Dorsolateral prefrontal cortex (tissue), 120 donors: ENCODE measurements at regions of chr9 and their contacts with region 1.

Region 1: GRCh38 chr9:33903157-33903780 is 86.3 kb downstream of the UBE2R2 start:
- DNase-seq: no peak
- H3K4me3 ChIP-seq: no peak overlapping the region
- H3K27ac ChIP-seq: no peak overlapping the region
- H3K27me3 ChIP-seq: no peaks in the 10 kb centered on the region
- CTCF ChIP-seq: no peak

Region 2: GRCh38 chr9:33959725-33960124 is 56.5 kb after region 1 on chr9:
- intact Hi-C with region 1: loop called in 1 of 2 experiments (anchors 2 kb)
- DNase-seq: no peak
- H3K4me3 ChIP-seq: no peak overlapping the region
- H3K27ac ChIP-seq: no peak overlapping the region
- H3K27me3 ChIP-seq: no peaks in the 10 kb centered on the region
- CTCF ChIP-seq: no peak